MCF 10A (cell line): ENCODE measurements at regions of chr1 and their contacts with region 1.

Region 1: DNA sequence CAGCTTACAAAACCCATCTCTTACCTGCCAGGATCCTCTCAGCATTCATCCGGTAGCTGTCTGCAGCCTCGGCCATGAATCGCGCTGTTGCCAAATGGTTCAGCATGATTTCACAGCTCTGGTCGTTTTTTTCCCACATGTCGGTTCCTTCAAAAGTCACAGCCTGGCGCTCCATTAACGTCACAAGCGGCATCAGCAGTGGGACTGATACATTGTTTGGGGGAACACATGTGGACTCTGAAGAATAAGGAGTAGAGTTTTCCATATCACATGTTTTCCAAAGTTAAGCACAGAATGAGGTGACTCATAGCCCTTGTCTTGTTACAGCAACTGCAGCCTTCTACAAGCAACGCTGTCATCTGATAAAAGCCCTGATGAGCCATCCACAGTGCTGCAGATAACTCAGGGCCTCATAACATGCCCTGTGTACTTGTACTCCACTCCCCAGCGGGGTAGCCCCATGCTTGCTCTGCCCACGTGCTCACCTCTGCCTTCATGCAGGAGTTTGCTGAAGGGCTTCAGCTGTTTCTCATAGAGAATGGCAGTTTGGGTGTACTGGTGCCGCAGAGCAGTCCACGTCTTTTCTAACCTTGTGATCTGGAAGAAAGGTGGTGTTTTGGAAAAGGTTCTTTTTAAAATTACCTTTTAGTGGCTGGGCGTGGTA is 114.2 kb downstream of the BCAR3 start:
- DNase-seq: peak; percentile 48
- H3K4me3 Mint-ChIP-seq: no peak overlapping the region
- H3K27ac Mint-ChIP-seq: peak overlapping the region; percentile 73
- H3K4me1 Mint-ChIP-seq: peaks cover 9% of the 10 kb centered on the region
- H3K27me3 Mint-ChIP-seq: no peaks in the 10 kb centered on the region
- CTCF ChIP-seq: no peak

Region 2: DNA sequence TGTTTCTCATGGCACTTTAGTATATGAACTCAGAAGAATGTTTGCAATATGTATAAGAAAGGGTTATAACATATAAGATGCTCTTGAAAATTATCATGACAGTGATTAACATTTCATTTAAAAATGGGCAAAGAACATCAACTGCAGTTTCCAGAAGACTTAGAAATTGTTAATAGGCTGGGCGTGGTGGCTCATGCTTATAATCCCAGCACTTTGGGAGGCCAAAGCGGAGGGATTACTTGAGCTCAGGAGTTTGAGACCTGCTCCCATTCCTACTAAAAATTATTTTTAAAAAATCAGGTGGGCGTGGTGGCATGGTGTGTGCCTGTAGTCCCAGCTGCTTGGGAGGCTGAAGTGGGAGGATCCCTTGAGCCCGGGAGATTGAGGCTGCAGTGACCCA is 465.2 kb before region 1 on chr1:
- CTCF ChIA-PET with region 1: no interaction called
- POLR2A ChIA-PET with region 1: no interaction called
- intact Hi-C with region 1: no loop called
- DNase-seq: no peak
- H3K4me3 Mint-ChIP-seq: no peak overlapping the region
- H3K27ac Mint-ChIP-seq: no peak overlapping the region
- H3K4me1 Mint-ChIP-seq: peaks cover 7% of the 10 kb centered on the region
- H3K27me3 Mint-ChIP-seq: no peaks in the 10 kb centered on the region
- CTCF ChIP-seq: no peak

Region 3: DNA sequence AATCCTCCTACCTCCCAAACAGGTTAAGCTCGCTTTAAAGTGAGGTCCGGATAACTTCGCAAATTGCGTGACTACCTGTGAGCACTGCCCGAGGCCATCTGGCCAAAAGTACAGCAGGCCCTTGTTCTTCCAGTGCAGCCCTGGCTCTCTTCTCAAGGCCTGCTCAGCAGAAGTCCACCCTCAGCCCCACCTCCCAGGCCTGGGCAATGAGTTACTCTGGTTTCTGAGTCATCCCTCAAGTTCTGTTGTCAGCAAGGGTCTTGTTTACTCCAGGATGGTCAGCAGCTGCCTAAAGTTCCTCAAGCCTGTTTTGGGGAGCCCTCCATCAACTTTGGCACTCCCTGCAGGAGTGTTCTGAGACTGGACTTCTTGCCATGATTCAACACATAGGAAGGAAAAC is 12.5 kb after region 1 on chr1:
- CTCF ChIA-PET with region 1: interaction called, 4 read pairs
- POLR2A ChIA-PET with region 1: interaction called, 11 read pairs
- intact Hi-C with region 1: no loop called
- DNase-seq: peak; percentile 45
- H3K4me3 Mint-ChIP-seq: no peak overlapping the region
- H3K27ac Mint-ChIP-seq: peak overlapping the region; percentile 71
- H3K4me1 Mint-ChIP-seq: peaks cover 16% of the 10 kb centered on the region
- H3K27me3 Mint-ChIP-seq: no peaks in the 10 kb centered on the region
- CTCF ChIP-seq: no peak